PC-3 (cell line): ENCODE measurements at regions of chr1 and their contacts with region 1.

Region 1: DNA sequence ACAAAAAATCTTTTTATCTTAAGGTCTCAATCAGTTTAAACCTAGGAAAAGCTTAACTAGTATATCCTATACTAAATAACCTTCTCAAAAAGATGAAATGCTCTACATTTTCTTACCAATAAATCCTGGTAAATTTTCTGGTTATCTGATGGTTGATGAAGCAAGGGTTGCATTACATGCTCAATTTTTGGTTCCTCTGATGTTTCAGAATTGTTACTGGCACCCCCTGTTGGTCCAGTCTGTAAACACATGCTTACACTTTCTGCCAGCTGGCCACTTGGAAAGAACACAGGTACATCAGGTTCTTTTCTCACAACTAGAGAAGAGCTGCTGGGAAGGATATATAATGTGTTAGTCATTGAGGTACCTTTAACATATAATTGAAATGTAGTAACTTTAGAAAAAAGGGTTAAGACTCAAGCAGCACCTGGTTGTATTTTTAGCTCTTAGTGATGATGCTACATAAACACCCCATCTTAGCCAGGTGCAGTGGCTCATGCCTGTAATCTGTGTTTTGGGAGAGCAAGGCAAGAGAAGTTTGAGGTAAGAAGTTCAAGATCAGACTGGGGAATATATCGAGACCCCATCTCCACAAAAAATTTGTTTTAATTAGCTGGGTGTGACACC is 30.9 kb upstream of the TAL1 start:
- DNase-seq: peak; percentile 69
- ATAC-seq: peak; percentile 60; the same call in 1 of the 2 replicates
- H3K4me3 ChIP-seq: no peak overlapping the region
- H3K27ac ChIP-seq: no peak overlapping the region
- H3K4me1 ChIP-seq: no peaks in the 10 kb centered on the region
- H3K27me3 ChIP-seq: no peaks in the 10 kb centered on the region
- CTCF ChIP-seq: peak; percentile 82

Region 2: DNA sequence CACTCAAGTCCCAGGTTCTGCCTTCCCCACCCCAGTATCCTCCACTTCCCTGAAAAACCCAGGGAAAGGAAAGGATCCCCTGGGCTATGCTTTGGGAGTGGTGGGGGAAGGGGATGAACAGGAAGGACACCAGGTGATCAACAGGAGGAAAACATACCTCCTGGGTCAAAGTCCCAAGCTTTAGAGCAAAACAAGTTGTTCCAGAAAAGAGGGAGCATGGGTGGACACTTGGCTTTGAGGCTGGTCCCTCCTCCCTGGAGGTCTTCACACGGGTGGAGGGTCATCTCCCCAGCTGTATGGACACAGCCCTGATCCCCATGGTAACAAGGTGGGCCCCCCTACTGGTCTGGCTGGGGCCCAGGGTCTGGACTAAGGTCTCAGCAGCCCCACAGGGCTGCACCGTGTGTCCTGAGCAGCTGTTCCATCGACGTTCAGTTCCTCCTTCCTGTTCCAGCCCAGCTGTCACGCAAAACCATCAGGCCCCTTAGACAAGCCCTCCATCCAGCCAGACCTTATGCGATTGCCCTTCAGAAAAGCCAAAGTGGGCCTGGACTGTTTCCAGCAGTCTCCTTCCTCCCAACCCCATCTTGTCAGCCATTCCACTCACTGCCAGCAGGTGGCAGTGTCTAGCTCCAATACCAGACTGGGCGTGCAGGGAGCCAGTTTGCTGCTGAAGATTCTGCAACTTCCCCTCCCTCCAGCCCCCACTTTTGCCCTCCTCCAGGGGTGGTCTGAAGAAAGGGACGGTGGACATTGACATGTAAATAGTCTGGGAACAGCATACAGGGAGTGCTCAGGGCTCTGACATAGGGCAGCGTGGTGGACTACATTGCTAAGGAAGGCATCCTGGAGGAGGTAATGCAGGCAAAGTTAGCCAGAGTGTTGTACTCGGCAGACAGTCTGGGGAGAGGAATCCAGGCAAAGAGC is 70.2 kb before region 1 on chr1:
- CTCF ChIA-PET with region 1: interaction called, 6 read pairs
- POLR2A ChIA-PET with region 1: no interaction called
- intact Hi-C with region 1: loop called (anchors 1 kb)
- DNase-seq: peak; percentile 81
- ATAC-seq: peak; percentile 70
- H3K4me3 ChIP-seq: no peak overlapping the region
- H3K27ac ChIP-seq: no peak overlapping the region
- H3K4me1 ChIP-seq: no peaks in the 10 kb centered on the region
- H3K27me3 ChIP-seq: no peaks in the 10 kb centered on the region
- CTCF ChIP-seq: peak; percentile 94

Region 3: DNA sequence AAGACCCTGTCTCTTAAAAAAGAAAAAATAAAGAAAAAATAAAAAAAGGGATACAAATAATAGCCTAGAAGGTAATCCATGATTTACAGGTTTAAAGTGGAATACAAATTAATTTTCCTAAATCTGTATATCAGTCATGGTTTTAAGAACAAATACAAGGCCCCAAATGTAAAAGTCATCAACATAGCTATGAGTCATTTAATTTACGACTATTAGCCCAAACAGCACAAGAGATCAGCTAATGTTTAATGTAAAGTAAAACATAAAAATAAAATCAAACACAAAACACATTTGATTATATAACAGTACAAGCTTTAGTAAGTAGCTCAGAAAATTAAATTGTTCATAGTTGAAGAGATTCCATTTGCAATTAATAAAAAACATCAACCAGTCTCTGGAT is 10.5 kb before region 1 on chr1:
- CTCF ChIA-PET with region 1: no interaction called
- POLR2A ChIA-PET with region 1: interaction called, 16 read pairs
- intact Hi-C with region 1: no loop called
- DNase-seq: peak; percentile 26
- ATAC-seq: peak; percentile 66
- H3K4me3 ChIP-seq: no peak overlapping the region
- H3K27ac ChIP-seq: no peak overlapping the region
- H3K4me1 ChIP-seq: no peaks in the 10 kb centered on the region
- H3K27me3 ChIP-seq: no peaks in the 10 kb centered on the region
- CTCF ChIP-seq: no peak